ENCODE measurements at regions of chr2 and their contacts with region 1.

Region 1: GRCh38 chr2:20650880-20651730 is at the start of gene HS1BP3:
- DNase-seq: peak; percentile 87 to 99 (median 94)
- ATAC-seq: peak; percentile 97
- H3K4me3 ChIP-seq: peak within 1 kb of the TSS; percentile 80
- H3K4me3 Mint-ChIP-seq: peak within 1 kb of the TSS; percentile 86 to 95 (median 90)
- H3K27ac ChIP-seq: peak within 1 kb of the TSS; percentile 86
- H3K27ac Mint-ChIP-seq: peak within 1 kb of the TSS; percentile 90 to 99 (median 96)
- H3K4me1 ChIP-seq: peaks cover 16 to 20% of the 10 kb centered on the region in 2 donors
- H3K4me1 Mint-ChIP-seq: peaks cover 22 to 42% (median 39%) of the 10 kb centered on the region in 7 donors
- H3K27me3 ChIP-seq: no peaks in the 10 kb centered on the region
- H3K27me3 Mint-ChIP-seq: peaks cover 0 to 11% (median 0%) of the 10 kb centered on the region in 5 donors
- total RNA-seq, gene HS1BP3: 12.0 to 19.0 (median 18.3) TPM

Region 2: GRCh38 chr2:19901442-19902215 is 749.5 kb before region 1 on chr2 and contains the start of gene TTC32:
- CTCF ChIA-PET with region 1: no interaction called
- POLR2A ChIA-PET with region 1: interaction called, 4 read pairs
- intact Hi-C with region 1: loop called (anchors 1 to 2 kb)
- DNase-seq: peak; percentile 90 to 98 (median 96)
- ATAC-seq: peak; percentile 91
- H3K4me3 ChIP-seq: peak within 1 kb of the TSS; percentile 95
- H3K4me3 Mint-ChIP-seq: peak within 1 kb of the TSS; percentile 84 to 99 (median 96)
- H3K27ac ChIP-seq: peak within 1 kb of the TSS; percentile 83
- H3K27ac Mint-ChIP-seq: peak within 1 kb of the TSS; percentile 93 to 100 (median 99)
- H3K4me1 ChIP-seq: peaks cover 15 to 23% of the 10 kb centered on the region in 2 donors
- H3K4me1 Mint-ChIP-seq: peaks cover 24 to 35% (median 31%) of the 10 kb centered on the region in 7 donors
- H3K27me3 ChIP-seq: no peaks in the 10 kb centered on the region
- H3K27me3 Mint-ChIP-seq: peaks cover 8 to 19% (median 13%) of the 10 kb centered on the region in 5 donors
- total RNA-seq, gene TTC32: 23.1 to 58.0 (median 44.9) TPM

Region 3: GRCh38 chr2:20411361-20411894 is 239.7 kb before region 1 on chr2:
- CTCF ChIA-PET with region 1: interaction called, 9 read pairs
- POLR2A ChIA-PET with region 1: interaction called, 3 read pairs
- intact Hi-C with region 1: loop called (anchors 1 to 2 kb)
- DNase-seq: peak; percentile 27 to 67 (median 55)
- ATAC-seq: peak; percentile 100
- H3K4me3 ChIP-seq: no peak overlapping the region
- H3K4me3 Mint-ChIP-seq: no peak overlapping the region
- H3K27ac ChIP-seq: no peak overlapping the region
- H3K27ac Mint-ChIP-seq: no peak overlapping the region
- H3K4me1 ChIP-seq: no peaks in the 10 kb centered on the region
- H3K4me1 Mint-ChIP-seq: peaks cover 0 to 6% (median 0%) of the 10 kb centered on the region in 7 donors
- H3K27me3 ChIP-seq: no peaks in the 10 kb centered on the region
- H3K27me3 Mint-ChIP-seq: peaks cover 0 to 43% (median 8%) of the 10 kb centered on the region in 5 donors

Region 4: GRCh38 chr2:20578895-20579825 is 71.9 kb before region 1 on chr2:
- CTCF ChIA-PET with region 1: no interaction called
- POLR2A ChIA-PET with region 1: interaction called, 5 read pairs
- intact Hi-C with region 1: loop called in 1 of 2 experiments (anchors 1 kb)
- DNase-seq: no peak
- ATAC-seq: no peak
- H3K4me3 ChIP-seq: no peak overlapping the region
- H3K4me3 Mint-ChIP-seq: no peak overlapping the region
- H3K27ac ChIP-seq: no peak overlapping the region
- H3K27ac Mint-ChIP-seq: no peak overlapping the region
- H3K4me1 ChIP-seq: peaks cover 13% of the 10 kb centered on the region in 2 donors
- H3K4me1 Mint-ChIP-seq: peaks cover 9 to 22% (median 10%) of the 10 kb centered on the region in 7 donors
- H3K27me3 ChIP-seq: no peaks in the 10 kb centered on the region
- H3K27me3 Mint-ChIP-seq: no peaks in the 10 kb centered on the region

Region 5: GRCh38 chr2:20666304-20667150 is 15.4 kb after region 1 on chr2 and contains the start of gene GDF7:
- CTCF ChIA-PET with region 1: interaction called, 37 read pairs
- POLR2A ChIA-PET with region 1: no interaction called
- intact Hi-C with region 1: loop called in 1 of 2 experiments (anchors 2 kb)
- DNase-seq: peak in 2 of 9 donors; percentile 26 to 46
- ATAC-seq: peak; percentile 32
- H3K4me3 ChIP-seq: peak within 1 kb of the TSS; percentile 46
- H3K4me3 Mint-ChIP-seq: peak within 1 kb of the TSS; percentile 78 to 91 (median 84)
- H3K27ac ChIP-seq: no peak within 1 kb of the TSS
- H3K27ac Mint-ChIP-seq: no peak within 1 kb of the TSS
- H3K4me1 ChIP-seq: peaks cover 0 to 6% of the 10 kb centered on the region in 2 donors
- H3K4me1 Mint-ChIP-seq: peaks cover 6 to 32% (median 15%) of the 10 kb centered on the region in 7 donors
- H3K27me3 ChIP-seq: peaks cover 10 to 21% of the 10 kb centered on the region in 2 donors
- H3K27me3 Mint-ChIP-seq: peaks cover 47 to 74% (median 65%) of the 10 kb centered on the region in 5 donors
- total RNA-seq, gene GDF7: 0.03 to 0.20 (median 0.05) TPM in 3 of 5 experiments, not detected in the others

Measured in naive thymus-derived CD4-positive, alpha-beta T cell (primary cell).